CD8-positive, alpha-beta memory T cell (primary cell): ENCODE measurements at regions of chrX and their contacts with region 1.

Region 1: DNA sequence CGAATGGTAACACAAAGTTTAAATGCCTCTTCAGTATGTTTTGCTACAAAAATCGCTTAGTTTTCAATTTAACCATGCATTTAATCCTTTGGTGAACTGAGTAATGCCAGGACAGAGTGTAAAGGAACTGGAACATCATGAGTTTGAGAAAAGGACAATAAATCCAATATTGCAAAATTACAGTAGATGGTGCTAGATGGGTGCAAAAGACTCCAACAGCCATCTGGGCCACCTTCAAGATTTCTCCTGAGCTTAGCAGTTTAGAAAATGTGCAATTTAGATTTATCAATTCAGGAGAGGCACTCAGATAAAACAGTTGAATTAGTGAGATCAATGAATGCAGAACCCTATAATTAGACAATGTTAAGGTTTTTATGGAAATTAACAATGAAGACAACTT is 33.2 kb upstream of the MID1IP1 start:
- DNase-seq: peak in 2 of 5 donors; percentile 1 to 7
- H3K4me3 ChIP-seq: no peak overlapping the region
- H3K4me3 Mint-ChIP-seq: no peak overlapping the region
- H3K27ac ChIP-seq: no peak overlapping the region
- H3K27ac Mint-ChIP-seq: no peak overlapping the region
- H3K4me1 ChIP-seq: no peaks in the 10 kb centered on the region
- H3K4me1 Mint-ChIP-seq: no peaks in the 10 kb centered on the region
- H3K27me3 ChIP-seq: no peaks in the 10 kb centered on the region
- H3K27me3 Mint-ChIP-seq: peaks cover 0 to 1% of the 10 kb centered on the region in 2 donors

Region 2: GRCh38 chrX:38233891-38234667 is 534.0 kb before region 1 on chrX:
- CTCF ChIA-PET with region 1: no interaction called
- POLR2A ChIA-PET with region 1: no interaction called
- DNase-seq: no peak
- H3K4me3 ChIP-seq: no peak overlapping the region
- H3K4me3 Mint-ChIP-seq: no peak overlapping the region
- H3K27ac ChIP-seq: no peak overlapping the region
- H3K27ac Mint-ChIP-seq: no peak overlapping the region
- H3K4me1 ChIP-seq: no peaks in the 10 kb centered on the region
- H3K4me1 Mint-ChIP-seq: no peaks in the 10 kb centered on the region
- H3K27me3 ChIP-seq: no peaks in the 10 kb centered on the region
- H3K27me3 Mint-ChIP-seq: peaks cover 19 to 23% of the 10 kb centered on the region in 2 donors

Region 3: DNA sequence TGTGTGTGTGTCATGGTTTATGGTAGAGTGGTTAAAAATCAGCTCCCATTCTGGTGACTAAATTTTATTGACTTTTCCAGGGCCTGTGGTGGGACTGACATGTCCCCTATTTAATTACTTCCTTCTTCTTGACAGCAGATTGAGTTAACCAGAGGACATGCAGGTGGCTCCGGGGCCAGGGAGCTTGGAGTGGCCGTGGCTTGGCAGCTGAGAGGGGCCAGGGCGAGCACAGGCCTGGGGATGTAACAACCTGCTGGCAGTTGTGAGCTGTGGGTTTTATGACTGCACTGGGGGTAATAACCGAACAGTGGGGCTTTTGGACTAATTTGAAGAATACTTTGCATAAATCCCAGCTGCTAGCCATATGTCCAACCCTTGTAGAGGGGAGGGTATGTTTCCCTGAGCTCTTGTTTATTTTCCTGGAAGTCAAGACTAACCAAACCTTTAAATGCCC is 219.1 kb after region 1 on chrX:
- CTCF ChIA-PET with region 1: interaction called, 19 read pairs
- POLR2A ChIA-PET with region 1: no interaction called
- DNase-seq: no peak
- H3K4me3 ChIP-seq: no peak overlapping the region
- H3K4me3 Mint-ChIP-seq: no peak overlapping the region
- H3K27ac ChIP-seq: no peak overlapping the region
- H3K27ac Mint-ChIP-seq: no peak overlapping the region
- H3K4me1 ChIP-seq: no peaks in the 10 kb centered on the region
- H3K4me1 Mint-ChIP-seq: no peaks in the 10 kb centered on the region
- H3K27me3 ChIP-seq: no peaks in the 10 kb centered on the region
- H3K27me3 Mint-ChIP-seq: peaks cover 0 to 13% of the 10 kb centered on the region in 2 donors